Posterior vena cava (tissue), 2 donors: ENCODE measurements at regions of chr16 and their contacts with region 1.

Region 1: DNA sequence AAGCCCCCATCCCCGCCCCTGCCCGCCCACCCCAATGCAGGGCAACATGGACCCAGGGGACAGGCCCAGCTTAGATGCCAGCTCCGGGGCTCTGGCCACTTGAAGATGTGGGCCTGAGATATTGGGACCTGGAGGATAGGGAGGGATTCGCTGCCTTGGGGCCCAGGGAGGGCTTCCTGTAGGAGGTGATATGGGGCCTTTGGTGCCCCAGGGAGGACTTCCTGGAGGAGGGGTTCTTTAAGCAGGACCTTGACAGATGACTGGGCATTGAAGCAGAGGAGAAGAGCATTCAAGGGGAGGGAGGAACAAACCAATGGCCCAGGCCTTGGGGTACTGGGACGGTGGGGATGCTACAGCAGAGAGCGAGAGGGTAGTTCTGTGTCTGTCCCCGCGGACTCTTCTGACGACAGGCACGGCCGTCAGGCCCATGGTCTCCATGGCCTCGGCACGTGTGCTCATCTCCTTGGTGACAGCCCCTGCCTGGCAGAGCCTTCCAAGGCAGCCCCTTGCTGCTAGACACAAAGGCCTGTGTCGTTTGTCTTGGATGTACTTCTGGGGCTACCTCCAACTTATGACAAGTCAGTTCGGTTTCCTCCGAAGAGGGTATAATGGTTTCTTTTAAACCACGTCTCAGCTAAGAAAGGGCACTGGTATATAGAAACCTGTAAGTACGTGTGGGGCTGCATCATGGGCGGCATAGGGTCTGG is 55.5 kb upstream of the ZC3H18 start:
- DNase-seq: no peak

Region 2: GRCh38 chr16:88194397-88195268 is 320.0 kb before region 1 on chr16:
- intact Hi-C with region 1: no loop called
- DNase-seq: no peak

Region 3: GRCh38 chr16:88479793-88480760 is 34.6 kb before region 1 on chr16:
- intact Hi-C with region 1: no loop called
- DNase-seq: no peak

Region 4: GRCh38 chr16:88527186-88527936 is 12.7 kb after region 1 on chr16:
- intact Hi-C with region 1: no loop called
- DNase-seq: no peak

Region 5: GRCh38 chr16:89226966-89227365 is 712.3 kb after region 1 on chr16:
- intact Hi-C with region 1: loop called in 1 of 2 experiments (anchors 2 kb)
- DNase-seq: no peak